Posterior cingulate gyrus (tissue), 11 donors: ENCODE measurements at regions of chr2 and their contacts with region 1.

Region 1: GRCh38 chr2:238370823-238371372 is 50.6 kb downstream of the TRAF3IP1 start:
- DNase-seq: peak in 7 of 10 donors; percentile 40 to 93 (median 60)

Region 2: GRCh38 chr2:237966565-237967462 is 404.1 kb before region 1 on chr2 and contains the start of gene UBE2F:
- intact Hi-C with region 1: no loop called
- DNase-seq: peak; percentile 96 to 100 (median 98)

Region 3: GRCh38 chr2:238420878-238421694 is 50.2 kb after region 1 on chr2:
- intact Hi-C with region 1: no loop called
- DNase-seq: no peak

Region 4: DNA sequence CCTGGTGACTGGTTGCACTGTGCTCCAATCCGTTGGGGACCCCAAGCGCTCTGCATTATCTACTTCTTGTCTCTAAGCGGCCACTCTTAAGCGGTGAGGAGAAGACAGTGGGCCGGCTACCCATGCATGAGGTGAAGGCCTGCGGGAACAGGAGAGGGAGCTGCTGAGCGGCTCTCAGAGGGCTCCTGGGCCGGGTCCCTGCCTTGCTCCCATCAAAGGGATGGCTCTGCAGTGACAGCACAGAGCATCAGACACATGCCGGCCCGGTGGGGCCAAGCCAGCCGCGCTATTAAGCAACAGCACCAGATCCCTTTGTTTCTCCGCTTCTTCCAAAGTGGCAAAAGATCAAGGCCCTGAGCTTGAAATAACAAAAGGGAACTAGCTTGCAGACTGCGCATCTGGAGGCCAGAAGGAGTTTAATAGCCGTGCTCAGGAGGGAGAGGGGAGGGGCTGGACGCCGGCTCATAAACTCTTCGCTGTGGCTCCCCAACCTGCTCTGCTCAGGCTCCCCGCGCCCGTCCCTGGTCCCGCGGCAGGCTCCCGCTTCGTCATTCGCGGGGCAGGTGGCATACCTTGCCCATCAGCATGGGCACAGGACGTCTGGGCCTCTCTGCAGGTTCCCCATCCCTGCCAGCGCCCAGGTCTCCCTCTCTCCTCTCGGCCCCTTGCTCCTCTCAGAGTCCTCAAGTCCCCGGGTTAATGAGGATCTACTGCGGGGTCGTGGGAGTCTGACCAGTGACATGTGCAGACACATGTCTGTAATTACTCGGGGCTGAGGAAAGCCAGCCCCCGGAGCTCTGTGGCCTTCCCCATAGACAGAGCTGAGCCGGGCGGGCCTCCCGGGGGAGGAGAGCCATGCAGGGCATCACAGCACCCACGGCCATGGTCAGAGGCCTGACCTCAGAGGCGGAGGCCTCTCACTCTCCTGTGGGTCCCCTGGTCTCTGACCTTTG is 152.5 kb after region 1 on chr2:
- intact Hi-C with region 1: no loop called
- DNase-seq: no peak

Region 5: DNA sequence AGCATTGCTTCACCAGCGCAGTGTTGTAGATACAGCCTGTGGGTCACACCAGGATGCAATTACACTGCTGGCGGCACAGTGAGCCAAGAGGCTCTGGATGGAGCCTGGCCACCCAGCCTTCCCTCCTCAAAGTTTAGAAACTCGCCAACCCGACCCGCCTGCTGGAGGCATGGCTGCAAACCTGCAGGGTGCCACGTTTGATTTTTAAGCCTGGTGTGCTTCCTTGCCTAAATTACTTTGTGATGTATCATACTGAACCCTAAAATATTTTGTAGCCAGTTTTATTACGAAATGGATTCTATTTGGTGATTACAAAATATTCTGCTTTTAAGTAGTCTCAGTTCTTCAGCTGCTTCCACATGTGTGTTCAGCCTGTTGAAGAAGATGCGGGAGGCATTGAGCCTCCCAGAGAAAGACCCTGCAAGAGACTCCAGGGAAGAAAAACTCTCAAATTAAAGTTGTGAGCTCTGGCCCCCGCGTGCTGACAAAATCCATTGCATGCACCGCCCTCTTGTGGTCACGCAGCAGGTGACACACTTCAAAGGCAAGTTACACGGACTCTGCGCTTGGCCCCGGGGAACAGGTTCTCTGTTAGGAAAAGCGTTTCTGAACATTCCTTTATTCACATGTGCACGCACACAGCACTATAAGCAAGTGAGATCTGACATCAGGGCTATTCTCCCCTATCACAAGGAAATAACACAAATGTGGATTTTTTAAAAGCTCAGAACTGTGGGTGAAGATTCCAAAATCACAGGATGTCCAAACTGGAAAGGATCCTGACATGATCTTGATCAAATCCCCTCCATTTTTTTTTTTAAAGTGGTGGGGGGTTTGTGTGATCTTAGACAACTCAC is 414.0 kb after region 1 on chr2:
- intact Hi-C with region 1: loop called (anchors 5 kb)
- DNase-seq: peak; percentile 39 to 96 (median 76)

Region 6: DNA sequence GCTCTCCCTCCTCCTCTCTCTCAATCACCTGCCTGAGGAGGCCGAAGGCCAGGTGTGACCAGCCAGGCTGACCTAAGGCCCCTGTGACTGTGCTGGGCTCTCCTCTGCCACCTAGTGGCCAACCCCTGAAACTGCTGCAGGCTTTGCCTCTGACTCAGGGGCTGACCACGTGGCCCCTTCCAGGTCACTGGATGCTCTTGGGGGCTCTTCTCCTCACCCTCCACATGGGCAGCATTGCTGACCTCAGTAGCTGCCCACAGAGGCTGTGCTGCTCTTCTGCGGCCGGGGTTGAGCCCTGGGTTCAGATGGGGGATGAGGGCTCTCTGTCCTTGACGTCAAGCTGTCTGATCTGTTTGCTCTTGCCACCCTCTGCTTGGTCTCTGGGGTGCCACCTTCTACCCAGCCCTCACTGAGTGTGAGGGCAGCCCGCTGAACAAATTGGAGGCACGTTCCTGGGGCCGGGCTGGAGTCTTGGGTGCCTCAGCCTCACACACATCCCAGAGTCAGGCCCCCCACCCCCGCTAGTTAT is 599.7 kb after region 1 on chr2:
- intact Hi-C with region 1: loop called (anchors 10 kb)
- DNase-seq: peak in 7 of 10 donors; percentile 36 to 92 (median 61)

Region 7: DNA sequence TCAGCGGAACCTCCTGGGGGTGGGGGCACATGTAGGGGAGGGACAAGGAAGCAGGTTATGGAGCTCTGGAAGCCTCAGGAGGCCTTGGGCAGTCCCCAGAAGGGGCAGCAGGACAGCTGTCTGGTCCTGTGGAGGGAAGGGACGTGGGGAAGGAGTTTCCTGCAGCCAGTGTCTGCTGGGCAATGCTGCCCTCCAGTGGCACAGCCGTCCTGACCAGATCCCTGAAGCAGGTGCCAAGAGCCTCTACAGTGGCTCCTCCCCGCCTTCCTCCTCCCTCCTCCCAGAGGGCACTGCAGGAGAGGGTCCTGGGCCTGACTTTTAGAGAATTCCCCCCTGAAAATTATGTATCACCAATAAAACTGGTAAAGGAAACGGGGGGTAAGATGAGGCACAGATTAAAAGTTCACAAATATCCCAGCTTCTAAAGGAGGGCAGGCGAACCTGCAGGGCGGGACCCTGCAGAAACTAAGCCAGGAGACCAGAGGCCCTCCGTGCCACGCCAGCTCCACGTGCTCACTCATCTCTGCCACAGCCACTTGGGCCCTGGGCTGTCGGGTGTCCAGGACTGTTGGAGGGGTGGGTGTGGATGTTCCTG is 735.5 kb after region 1 on chr2:
- intact Hi-C with region 1: loop called (anchors 2 kb)
- DNase-seq: peak; percentile 69 to 98 (median 86)